Kidney (tissue), 22 donors: ENCODE measurements at regions of chr9 and their contacts with region 1.

Region 1: GRCh38 chr9:104863180-104863883 is 64.6 kb downstream of the ABCA1 start:
- DNase-seq: peak in 4 of 5 donors; percentile 52 to 90 (median 74)
- H3K4me3 ChIP-seq: no peak overlapping the region
- H3K27ac ChIP-seq: no peak overlapping the region
- H3K4me1 ChIP-seq: peaks cover 4 to 15% (median 4%) of the 10 kb centered on the region in 3 donors
- H3K27me3 ChIP-seq: no peaks in the 10 kb centered on the region
- CTCF ChIP-seq: peak; percentile 81

Region 2: DNA sequence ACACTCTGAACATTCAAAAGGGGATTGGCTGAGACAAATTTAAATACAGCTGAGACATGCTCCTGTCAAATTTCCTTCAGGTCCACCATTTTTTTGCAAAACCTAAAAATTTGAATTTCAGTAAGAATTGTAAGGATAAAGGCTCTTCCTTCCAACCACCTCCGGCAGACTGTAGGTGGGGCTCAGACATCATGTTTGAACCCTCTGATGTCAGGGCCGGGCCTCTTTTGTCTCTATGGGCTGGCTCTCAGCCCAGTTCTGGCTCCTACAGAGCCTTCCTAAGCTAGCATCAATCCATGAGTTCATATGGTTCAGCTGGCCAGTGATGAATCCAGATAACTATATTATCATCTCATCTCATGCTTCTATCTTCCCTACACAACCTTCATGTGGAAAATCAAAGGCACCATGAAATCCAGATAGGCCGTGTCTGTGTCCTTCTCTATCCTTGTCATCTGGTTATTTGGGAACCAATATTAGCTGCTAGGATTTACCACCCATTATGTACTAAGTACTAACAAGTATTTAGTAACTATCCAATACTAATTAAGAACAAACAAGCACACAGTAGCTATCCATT is 55.2 kb before region 1 on chr9:
- intact Hi-C with region 1: no loop called
- DNase-seq: peak in 1 of 5 donors; percentile 19
- H3K4me3 ChIP-seq: peak overlapping the region in 1 of 3 donors; percentile 5
- H3K27ac ChIP-seq: no peak overlapping the region
- H3K4me1 ChIP-seq: peaks cover 0 to 13% (median 8%) of the 10 kb centered on the region in 3 donors
- H3K27me3 ChIP-seq: no peaks in the 10 kb centered on the region
- CTCF ChIP-seq: peak; percentile 33

Region 3: DNA sequence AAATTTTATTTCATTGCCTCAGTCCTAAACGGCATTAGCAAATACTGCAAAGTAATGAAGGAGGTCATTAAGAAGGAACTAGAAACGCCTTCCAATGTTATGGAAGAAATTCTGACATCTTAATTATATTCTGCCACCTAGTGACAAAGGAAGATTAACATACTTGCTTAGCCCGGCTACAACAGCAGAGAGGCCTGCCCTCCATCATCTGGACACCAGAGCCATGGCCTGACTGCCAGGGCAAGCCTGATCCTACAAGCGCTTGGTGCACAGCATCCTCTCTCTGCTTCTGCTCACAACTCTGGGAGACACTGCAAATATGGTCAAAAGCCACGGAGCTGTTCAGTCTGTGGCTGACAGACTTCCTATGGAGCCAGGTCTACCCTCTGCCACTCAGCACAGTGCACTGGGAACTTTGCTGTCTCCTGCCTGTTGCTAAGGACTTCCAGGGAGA is 293.8 kb after region 1 on chr9:
- intact Hi-C with region 1: loop called (anchors 10 kb)
- DNase-seq: peak in 4 of 5 donors; percentile 54 to 85 (median 70)
- H3K4me3 ChIP-seq: no peak overlapping the region
- H3K27ac ChIP-seq: no peak overlapping the region
- H3K4me1 ChIP-seq: no peaks in the 10 kb centered on the region
- H3K27me3 ChIP-seq: no peaks in the 10 kb centered on the region
- CTCF ChIP-seq: peak; percentile 49

Region 4: DNA sequence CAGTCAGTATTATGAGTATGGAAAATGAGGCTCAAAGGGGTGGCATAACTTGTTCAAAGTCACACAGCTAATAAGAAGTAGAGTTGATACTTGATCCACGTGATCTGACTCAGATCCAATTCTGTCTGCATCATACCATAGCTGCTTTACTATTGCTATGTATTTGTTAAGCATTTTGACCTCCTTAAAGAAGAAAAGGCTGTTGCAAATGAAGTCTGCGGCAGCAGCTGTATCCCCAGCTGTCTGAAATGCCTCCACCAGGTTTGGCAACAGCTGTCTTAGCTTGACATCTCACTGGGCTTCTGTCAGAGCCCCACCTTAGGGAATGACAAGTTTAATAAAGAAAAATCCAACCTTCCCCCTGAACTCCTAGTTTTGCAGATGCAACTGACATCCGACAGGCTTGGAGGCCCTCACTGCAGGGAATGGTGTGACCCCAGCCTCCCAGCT is 305.6 kb after region 1 on chr9:
- intact Hi-C with region 1: no loop called
- DNase-seq: peak in 1 of 5 donors; percentile 35
- H3K4me3 ChIP-seq: no peak overlapping the region
- H3K27ac ChIP-seq: no peak overlapping the region
- H3K4me1 ChIP-seq: no peaks in the 10 kb centered on the region
- H3K27me3 ChIP-seq: no peaks in the 10 kb centered on the region
- CTCF ChIP-seq: no peak

Region 5: GRCh38 chr9:105198865-105199264 is 335.5 kb after region 1 on chr9:
- intact Hi-C with region 1: no loop called
- DNase-seq: peak in 2 of 5 donors; percentile 13 to 22
- H3K4me3 ChIP-seq: no peak overlapping the region
- H3K27ac ChIP-seq: no peak overlapping the region
- H3K4me1 ChIP-seq: no peaks in the 10 kb centered on the region
- H3K27me3 ChIP-seq: no peaks in the 10 kb centered on the region
- CTCF ChIP-seq: no peak